Gastrocnemius medialis (tissue), 4 donors: ENCODE measurements at regions of chr2 and their contacts with region 1.

Region 1: DNA sequence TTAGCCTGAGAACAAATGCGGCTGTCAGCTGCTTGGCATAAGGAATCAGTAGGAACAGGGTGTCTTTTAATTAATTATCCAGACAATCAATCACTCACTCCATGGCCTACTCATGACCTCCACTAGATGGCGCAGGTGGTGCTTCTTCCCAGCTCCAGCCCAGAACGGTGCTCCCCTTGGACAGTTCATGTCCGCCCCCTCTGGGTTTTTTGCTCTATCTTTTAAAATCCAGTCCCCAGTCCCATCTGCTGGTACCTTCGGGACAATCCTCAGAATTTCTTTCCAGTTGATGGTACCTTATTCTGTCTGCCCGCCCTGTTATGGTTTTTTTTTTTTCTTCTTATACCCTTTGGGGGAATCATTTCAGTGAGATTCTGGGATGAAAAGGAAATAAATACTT is 99.8 kb downstream of the CACNB4 start:
- DNase-seq: peak; percentile 14 to 33
- ATAC-seq: peak; percentile 51
- H3K4me3 ChIP-seq: no peak overlapping the region
- H3K27ac ChIP-seq: no peak overlapping the region
- H3K4me1 ChIP-seq: peaks cover 6 to 7% of the 10 kb centered on the region in 2 donors
- H3K27me3 ChIP-seq: no peaks in the 10 kb centered on the region
- CTCF ChIP-seq: peak; percentile 49 to 87 (median 69)
- POLR2A ChIP-seq: no peak

Region 2: DNA sequence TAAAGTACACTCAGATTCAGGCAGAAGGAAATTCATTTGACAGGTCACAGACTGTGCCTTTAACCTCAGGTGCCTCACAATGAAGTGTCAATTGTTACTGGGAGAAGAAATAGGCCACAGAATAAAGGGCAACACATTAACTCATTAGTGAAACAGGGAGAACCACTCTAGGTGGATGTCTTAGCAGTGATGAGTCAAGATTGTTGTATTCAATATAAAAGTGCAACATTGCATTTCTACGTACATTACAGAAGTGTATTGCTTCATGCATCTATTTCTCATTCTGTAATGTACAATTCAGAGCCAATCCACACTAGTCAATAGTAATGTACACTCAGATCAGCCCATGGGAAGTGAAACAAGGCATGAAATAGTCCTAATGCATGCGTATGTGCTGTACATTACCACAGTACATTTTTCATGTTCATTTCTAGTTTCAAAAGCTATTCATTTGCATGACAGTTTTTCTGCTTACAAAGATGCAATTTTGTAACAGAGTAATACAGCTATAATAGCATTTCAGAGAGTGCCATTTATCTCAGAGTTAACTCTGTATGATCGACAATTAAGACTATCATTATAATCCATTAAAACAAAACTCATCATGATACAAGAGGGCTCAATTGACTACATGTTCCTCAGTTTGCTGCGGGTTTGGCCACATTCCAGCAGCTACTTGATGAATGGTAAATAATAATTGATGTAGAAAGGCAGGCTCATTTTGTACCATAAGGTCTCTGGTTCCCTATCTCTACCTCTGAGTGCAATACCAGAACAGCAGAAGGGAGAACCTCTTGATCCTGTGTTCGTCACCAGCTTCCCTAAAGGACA is 158.6 kb before region 1 on chr2:
- in situ Hi-C with region 1: loop called in 3 of 4 experiments (anchors 10 to 25 kb)
- intact Hi-C with region 1: no loop called
- DNase-seq: no peak
- ATAC-seq: no peak
- H3K4me3 ChIP-seq: no peak overlapping the region
- H3K27ac ChIP-seq: no peak overlapping the region
- H3K4me1 ChIP-seq: no peaks in the 10 kb centered on the region
- H3K27me3 ChIP-seq: no peaks in the 10 kb centered on the region
- CTCF ChIP-seq: no peak
- POLR2A ChIP-seq: no peak